Astrocyte of the cerebellum (primary cell): ENCODE measurements at regions of chr22 and their contacts with region 1.

Region 1: GRCh38 chr22:31616315-31617001 is 45.6 kb downstream of the PISD start:
- DNase-seq: no peak
- H3K4me3 ChIP-seq: no peak overlapping the region
- CTCF ChIP-seq: no peak

Region 2: GRCh38 chr22:31661851-31662656 is 45.6 kb after region 1 on chr22 and contains the start of gene PISD:
- in situ Hi-C with region 1: loop called (anchors 5 kb)
- DNase-seq: peak; percentile 91
- H3K4me3 ChIP-seq: peak within 1 kb of the TSS; percentile 92
- CTCF ChIP-seq: no peak